ENCODE measurements at regions of chr1 and their contacts with region 1.

Region 1: GRCh38 chr1:198612471-198613260 is 26.2 kb upstream of the PTPRC start:
- DNase-seq: peak in 2 of 9 experiments; percentile 44 to 67
- ATAC-seq: peak; percentile 50
- H3K4me3 ChIP-seq: peak overlapping the region; percentile 13 to 42
- H3K4me3 Mint-ChIP-seq: peak overlapping the region; percentile 83
- H3K27ac ChIP-seq: peak overlapping the region; percentile 54 to 85
- H3K27ac Mint-ChIP-seq: peak overlapping the region; percentile 98
- H3K4me1 ChIP-seq: peaks cover 65% of the 10 kb centered on the region
- H3K4me1 Mint-ChIP-seq: peaks cover 76% of the 10 kb centered on the region
- H3K27me3 ChIP-seq: no peaks in the 10 kb centered on the region
- H3K27me3 Mint-ChIP-seq: no peaks in the 10 kb centered on the region
- CTCF ChIP-seq: no peak

Region 2: GRCh38 chr1:198598796-198599321 is 13.8 kb before region 1 on chr1:
- CTCF ChIA-PET with region 1: interaction called, 4 read pairs
- POLR2A ChIA-PET with region 1: interaction called, 6 read pairs
- intact Hi-C with region 1: loop called in 1 of 2 experiments (anchors 1 kb)
- DNase-seq: peak in 2 of 9 experiments; percentile 17 to 31
- ATAC-seq: peak; percentile 59
- H3K4me3 ChIP-seq: no peak overlapping the region
- H3K4me3 Mint-ChIP-seq: peak overlapping the region; percentile 63
- H3K27ac ChIP-seq: peak overlapping the region in 1 of 2 experiments; percentile 58
- H3K27ac Mint-ChIP-seq: peak overlapping the region; percentile 91
- H3K4me1 ChIP-seq: peaks cover 65% of the 10 kb centered on the region
- H3K4me1 Mint-ChIP-seq: peaks cover 86% of the 10 kb centered on the region
- H3K27me3 ChIP-seq: no peaks in the 10 kb centered on the region
- H3K27me3 Mint-ChIP-seq: no peaks in the 10 kb centered on the region
- CTCF ChIP-seq: no peak

Region 3: DNA sequence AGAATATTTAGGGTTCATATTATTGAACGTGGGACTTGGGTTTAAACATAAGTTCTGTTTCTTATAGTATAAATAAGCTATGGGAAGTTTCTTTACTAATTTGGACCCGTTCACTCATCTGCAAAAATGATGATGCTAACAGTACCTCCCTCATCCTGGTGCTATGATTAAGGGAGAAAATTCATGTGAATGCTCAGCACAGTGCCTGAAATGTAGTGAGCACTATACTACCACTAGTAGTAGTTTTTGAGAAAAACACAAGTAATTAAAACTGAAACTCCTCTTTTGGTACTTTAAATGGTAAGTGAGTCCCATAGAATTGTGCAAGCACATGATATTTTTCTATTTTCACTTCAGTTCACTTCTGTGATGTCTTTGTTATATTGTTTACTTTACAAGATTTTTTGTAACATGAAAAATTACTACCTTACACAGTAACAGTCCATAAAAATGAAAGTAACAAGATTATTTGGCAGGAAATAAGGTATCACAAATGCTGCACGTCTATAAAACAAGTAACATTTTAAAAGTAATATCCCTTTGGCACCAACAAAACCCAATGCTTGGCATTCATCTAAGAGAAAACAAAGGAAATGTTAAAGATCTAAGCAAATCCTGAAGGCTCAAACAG is 14.9 kb after region 1 on chr1:
- CTCF ChIA-PET with region 1: interaction called, 17 read pairs
- POLR2A ChIA-PET with region 1: interaction called, 32 read pairs
- intact Hi-C with region 1: loop called in 1 of 2 experiments (anchors 2 kb)
- DNase-seq: peak in 1 of 9 experiments; percentile 59
- ATAC-seq: peak; percentile 55
- H3K4me3 ChIP-seq: peak overlapping the region; percentile 2 to 4
- H3K4me3 Mint-ChIP-seq: peak overlapping the region; percentile 40
- H3K27ac ChIP-seq: peak overlapping the region; percentile 6 to 72
- H3K27ac Mint-ChIP-seq: peak overlapping the region; percentile 85
- H3K4me1 ChIP-seq: peaks cover 97% of the 10 kb centered on the region
- H3K4me1 Mint-ChIP-seq: peaks cover 96% of the 10 kb centered on the region
- H3K27me3 ChIP-seq: no peaks in the 10 kb centered on the region
- H3K27me3 Mint-ChIP-seq: no peaks in the 10 kb centered on the region
- CTCF ChIP-seq: no peak

Measured in CD8-positive, alpha-beta T cell (primary cell).